ENCODE measurements at regions of chr19 and their contacts with region 1.

Region 1: DNA sequence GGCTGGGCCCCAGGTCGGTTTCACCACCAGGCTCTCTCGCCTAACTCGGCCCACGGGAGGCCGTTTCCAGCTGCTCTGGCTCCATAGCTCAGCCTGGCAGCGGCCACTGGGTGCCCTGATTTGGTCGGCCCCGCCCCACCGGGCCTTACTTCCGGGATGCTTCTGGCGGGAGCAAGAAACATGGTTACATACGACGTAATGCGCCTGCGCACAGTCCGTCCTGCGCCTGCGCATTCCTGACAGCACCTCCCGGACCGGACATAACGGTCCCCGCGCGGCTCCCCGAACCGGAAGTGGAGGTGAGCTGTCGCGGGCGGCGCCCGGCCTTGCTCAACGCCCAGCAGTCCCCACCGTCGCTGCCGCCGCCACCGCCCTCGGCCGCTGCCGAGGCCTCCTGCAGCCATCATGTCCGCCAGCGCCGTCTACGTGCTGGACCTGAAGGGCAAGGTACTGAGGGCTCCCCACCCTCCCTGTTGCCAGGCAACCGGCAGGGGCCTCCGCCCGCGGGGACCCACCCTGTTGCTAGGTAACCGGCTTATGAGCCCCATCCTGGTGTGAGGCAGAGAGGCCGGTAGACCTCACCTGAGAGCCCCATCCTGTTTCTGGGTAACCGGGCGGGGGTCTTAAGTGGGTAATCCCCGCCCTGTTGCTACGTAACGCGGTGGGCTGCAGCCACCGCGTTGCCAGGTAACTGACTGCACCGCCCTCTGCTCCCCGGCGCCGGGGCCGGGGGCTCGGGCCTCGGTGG is at the start of gene AP1M1:
- DNase-seq: peak; percentile 96 to 99
- ATAC-seq: peak; percentile 98 to 99
- H3K4me3 ChIP-seq: peak within 1 kb of the TSS; percentile 87 to 100 (median 92)
- H3K27ac ChIP-seq: peak within 1 kb of the TSS; percentile 77 to 93 (median 90)
- H3K4me1 ChIP-seq: peaks cover 20 to 27% of the 10 kb centered on the region in 2 donors
- H3K27me3 ChIP-seq: no peaks in the 10 kb centered on the region
- CTCF ChIP-seq: no peak
- POLR2A ChIP-seq: peak; percentile 1 to 56
- total RNA-seq, gene AP1M1: 68.2 to 119 (median 73.5) TPM

Region 2: GRCh38 chr19:15836595-15837337 is 361.0 kb before region 1 on chr19:
- in situ Hi-C with region 1: no loop called
- intact Hi-C with region 1: loop called (anchors 10 kb)
- DNase-seq: peak; percentile 93
- ATAC-seq: peak; percentile 99 to 100
- H3K4me3 ChIP-seq: peak overlapping the region; percentile 53 to 81 (median 79)
- H3K27ac ChIP-seq: peak overlapping the region; percentile 86 to 95 (median 90)
- H3K4me1 ChIP-seq: peaks cover 0 to 3% of the 10 kb centered on the region in 2 donors
- H3K27me3 ChIP-seq: no peaks in the 10 kb centered on the region
- CTCF ChIP-seq: no peak
- POLR2A ChIP-seq: peak; percentile 64 to 66

Region 3: GRCh38 chr19:16062789-16063188 is 135.0 kb before region 1 on chr19:
- in situ Hi-C with region 1: no loop called
- intact Hi-C with region 1: no loop called
- DNase-seq: no peak
- ATAC-seq: no peak
- H3K4me3 ChIP-seq: no peak overlapping the region
- H3K27ac ChIP-seq: no peak overlapping the region
- H3K4me1 ChIP-seq: no peaks in the 10 kb centered on the region
- H3K27me3 ChIP-seq: no peaks in the 10 kb centered on the region
- CTCF ChIP-seq: peak; percentile 33 to 67 (median 57)
- POLR2A ChIP-seq: no peak

Region 4: GRCh38 chr19:16111160-16111908 is 86.5 kb before region 1 on chr19 and contains the start of gene RAB8A:
- in situ Hi-C with region 1: loop called in 1 of 4 experiments (anchors 10 kb)
- intact Hi-C with region 1: loop called (anchors 1 kb)
- DNase-seq: peak; percentile 98 to 99
- ATAC-seq: peak; percentile 96 to 97
- H3K4me3 ChIP-seq: peak within 1 kb of the TSS; percentile 87 to 96 (median 90)
- H3K27ac ChIP-seq: peak within 1 kb of the TSS; percentile 90 to 95 (median 94)
- H3K4me1 ChIP-seq: peaks cover 11 to 20% of the 10 kb centered on the region in 2 donors
- H3K27me3 ChIP-seq: no peaks in the 10 kb centered on the region
- CTCF ChIP-seq: peak; percentile 92 to 99 (median 99)
- POLR2A ChIP-seq: no peak
- total RNA-seq, gene RAB8A: 8.3 to 12.1 (median 9.2) TPM

Region 5: DNA sequence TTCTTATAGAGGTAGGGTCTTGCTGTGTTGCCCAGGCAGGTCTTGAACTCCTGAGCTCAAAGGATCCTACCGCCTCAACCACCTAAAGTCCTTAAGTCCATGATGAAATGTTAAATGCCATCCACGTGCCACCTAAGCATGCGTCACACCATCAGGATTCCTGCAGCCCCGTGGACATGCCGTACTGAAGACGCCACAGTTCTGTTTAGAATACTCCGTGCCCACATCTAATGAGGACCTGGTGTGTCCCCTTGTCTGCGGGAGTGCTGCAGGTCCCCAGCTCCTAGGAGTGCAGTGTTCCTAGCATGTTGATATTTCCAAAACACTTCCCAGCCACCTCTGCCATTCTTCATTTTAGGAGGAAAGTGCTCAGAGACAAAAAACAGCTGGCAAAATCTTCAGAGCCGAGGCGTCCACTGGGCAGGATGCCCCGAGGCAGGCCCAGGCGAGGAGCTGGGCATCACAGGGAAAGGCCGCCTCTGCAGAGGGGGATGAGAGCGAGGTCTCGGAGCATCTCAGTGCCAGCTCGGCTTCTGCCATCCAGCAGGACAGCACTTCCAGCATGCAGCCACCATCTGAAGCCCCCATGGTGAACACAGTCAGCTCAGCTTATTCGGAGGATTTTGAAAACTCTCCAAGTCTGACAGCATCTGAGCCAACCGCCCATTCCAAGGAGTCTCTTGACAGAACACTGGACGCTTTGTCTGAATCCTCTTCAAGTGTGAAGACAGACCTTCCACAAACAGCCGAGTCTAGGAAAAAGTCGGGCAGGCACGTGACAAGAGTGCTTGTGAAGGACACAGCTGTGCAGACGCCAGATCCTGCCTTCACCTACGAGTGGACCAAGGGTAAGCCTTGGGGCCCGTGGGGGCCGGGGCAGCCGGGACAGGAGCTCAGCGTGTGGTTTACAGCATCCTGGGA is 311.6 kb after region 1 on chr19:
- in situ Hi-C with region 1: loop called in 1 of 4 experiments (anchors 25 kb)
- intact Hi-C with region 1: no loop called
- DNase-seq: no peak
- ATAC-seq: no peak
- H3K4me3 ChIP-seq: no peak overlapping the region
- H3K27ac ChIP-seq: no peak overlapping the region
- H3K4me1 ChIP-seq: no peaks in the 10 kb centered on the region
- H3K27me3 ChIP-seq: no peaks in the 10 kb centered on the region
- CTCF ChIP-seq: no peak
- POLR2A ChIP-seq: no peak